Activated CD8-positive, alpha-beta T cell treated with anti-CD3 and anti-CD28 coated beads for 36 hours (primary cell): ENCODE measurements at regions of chr12 and their contacts with region 1.

Region 1: DNA sequence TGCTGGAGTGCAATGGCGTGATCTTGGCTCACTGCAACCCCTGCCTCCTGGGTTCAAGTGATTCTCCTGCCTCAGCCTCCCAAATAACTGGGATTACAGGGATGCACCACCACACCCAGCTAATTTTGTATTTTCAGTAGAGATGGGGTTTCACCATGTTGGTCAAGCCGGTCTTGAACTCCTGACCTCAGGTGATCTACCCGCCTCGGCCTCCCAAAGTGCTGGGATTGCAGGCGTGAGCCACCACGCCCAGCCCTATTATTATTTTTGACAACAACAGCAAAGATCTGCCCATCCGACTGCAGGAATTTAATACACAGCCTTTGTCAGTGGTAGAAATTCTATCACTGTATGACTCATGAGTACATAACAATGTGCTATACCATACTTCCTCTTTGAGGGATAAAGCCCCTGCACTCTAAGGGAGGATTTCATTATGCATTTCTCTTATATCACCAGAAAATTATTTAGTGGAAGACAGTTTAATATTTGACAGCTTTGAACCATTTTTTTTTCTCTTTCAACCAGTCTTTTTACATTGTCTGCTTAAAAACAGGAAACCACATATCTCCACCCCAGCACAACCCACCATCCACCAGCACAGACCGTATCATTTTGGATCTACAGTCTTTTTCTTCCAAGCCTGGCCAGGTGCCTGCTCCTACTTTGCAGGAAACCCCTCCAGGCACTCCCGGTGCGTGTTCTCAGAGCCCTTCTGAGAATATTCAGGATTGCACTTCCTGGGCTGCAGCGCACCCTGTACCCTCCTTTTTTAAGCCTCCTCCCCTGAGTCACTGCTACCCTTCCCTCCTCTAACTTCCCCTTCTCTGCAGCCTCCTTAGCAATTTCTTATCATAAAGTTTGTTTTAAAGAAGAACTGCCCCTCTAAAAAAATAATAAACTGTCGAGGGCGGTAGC is 594 bp downstream of the ARHGDIB start:
- DNase-seq: peak; percentile 51
- ATAC-seq: peak; percentile 45
- H3K4me3 Mint-ChIP-seq: peak overlapping the region; percentile 94
- H3K27ac Mint-ChIP-seq: peak overlapping the region; percentile 97
- H3K4me1 Mint-ChIP-seq: peaks cover 44% of the 10 kb centered on the region
- H3K27me3 Mint-ChIP-seq: no peaks in the 10 kb centered on the region
- CTCF ChIP-seq: no peak

Region 2: DNA sequence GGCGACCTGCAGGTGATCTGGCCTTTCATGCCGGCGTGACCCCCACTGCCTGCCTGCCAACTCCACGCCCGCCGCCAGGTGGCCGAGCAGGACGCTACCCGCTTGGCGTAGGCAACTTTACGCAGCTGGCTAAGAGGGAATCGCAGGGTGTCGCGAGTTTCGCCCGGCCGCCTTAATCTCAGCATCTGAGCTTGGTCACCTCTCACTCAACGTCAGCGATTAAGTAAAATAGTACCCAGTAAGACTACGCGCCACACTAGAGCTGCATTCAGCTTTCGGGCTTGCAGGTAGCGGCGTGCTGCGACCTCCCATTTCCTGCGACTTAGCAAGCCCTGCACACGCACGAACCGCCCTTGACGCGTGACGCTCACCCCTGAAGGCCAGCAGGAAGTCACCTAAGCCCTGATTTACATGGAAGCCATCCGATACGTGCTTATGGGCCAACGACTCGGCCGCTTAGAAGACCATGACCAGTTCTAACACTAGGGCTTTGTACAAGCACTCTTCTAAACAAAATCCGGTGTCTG is 190.8 kb before region 1 on chr12:
- CTCF ChIA-PET with region 1: interaction called, 6 read pairs
- POLR2A ChIA-PET with region 1: interaction called, 22 read pairs
- intact Hi-C with region 1: loop called (anchors 2 kb)
- DNase-seq: peak; percentile 94
- ATAC-seq: peak; percentile 54
- H3K4me3 Mint-ChIP-seq: peak overlapping the region; percentile 95
- H3K27ac Mint-ChIP-seq: peak overlapping the region; percentile 99
- H3K4me1 Mint-ChIP-seq: peaks cover 33% of the 10 kb centered on the region
- H3K27me3 Mint-ChIP-seq: no peaks in the 10 kb centered on the region
- CTCF ChIP-seq: peak; percentile 66

Region 3: DNA sequence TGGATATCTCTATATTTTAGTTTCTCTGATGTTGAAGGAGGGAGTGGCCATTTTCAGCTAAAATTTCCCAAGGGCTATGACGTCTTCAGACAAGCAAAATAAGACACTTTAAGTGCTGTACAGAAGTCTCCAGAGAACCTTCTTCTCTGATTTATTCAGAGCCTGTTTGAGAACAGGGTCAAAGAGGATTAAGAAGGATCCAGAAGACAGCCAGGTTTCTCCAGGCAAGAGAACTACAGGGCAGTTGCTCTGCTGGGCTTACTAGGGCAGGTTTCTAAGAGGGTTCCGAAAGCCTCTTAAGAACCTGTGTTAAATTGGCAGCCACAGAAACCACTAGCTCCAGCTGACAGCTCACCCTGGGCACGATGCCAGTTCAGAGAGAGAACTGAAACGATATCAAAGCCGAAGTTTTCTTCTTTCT is 76.3 kb before region 1 on chr12:
- CTCF ChIA-PET with region 1: no interaction called
- POLR2A ChIA-PET with region 1: interaction called, 3 read pairs
- intact Hi-C with region 1: loop called (anchors 5 kb)
- DNase-seq: peak; percentile 92
- ATAC-seq: peak; percentile 87
- H3K4me3 Mint-ChIP-seq: peak overlapping the region; percentile 51
- H3K27ac Mint-ChIP-seq: peak overlapping the region; percentile 10
- H3K4me1 Mint-ChIP-seq: peaks cover 32% of the 10 kb centered on the region
- H3K27me3 Mint-ChIP-seq: peaks cover 5% of the 10 kb centered on the region
- CTCF ChIP-seq: no peak

Region 4: GRCh38 chr12:14948672-14949071 is 12.1 kb before region 1 on chr12:
- CTCF ChIA-PET with region 1: interaction called, 4 read pairs
- POLR2A ChIA-PET with region 1: interaction called, 41 read pairs
- intact Hi-C with region 1: loop called (anchors 2 kb)
- DNase-seq: peak; percentile 73
- ATAC-seq: peak; percentile 77
- H3K4me3 Mint-ChIP-seq: peak overlapping the region; percentile 68
- H3K27ac Mint-ChIP-seq: peak overlapping the region; percentile 97
- H3K4me1 Mint-ChIP-seq: peaks cover 84% of the 10 kb centered on the region
- H3K27me3 Mint-ChIP-seq: no peaks in the 10 kb centered on the region
- CTCF ChIP-seq: no peak

Region 5: DNA sequence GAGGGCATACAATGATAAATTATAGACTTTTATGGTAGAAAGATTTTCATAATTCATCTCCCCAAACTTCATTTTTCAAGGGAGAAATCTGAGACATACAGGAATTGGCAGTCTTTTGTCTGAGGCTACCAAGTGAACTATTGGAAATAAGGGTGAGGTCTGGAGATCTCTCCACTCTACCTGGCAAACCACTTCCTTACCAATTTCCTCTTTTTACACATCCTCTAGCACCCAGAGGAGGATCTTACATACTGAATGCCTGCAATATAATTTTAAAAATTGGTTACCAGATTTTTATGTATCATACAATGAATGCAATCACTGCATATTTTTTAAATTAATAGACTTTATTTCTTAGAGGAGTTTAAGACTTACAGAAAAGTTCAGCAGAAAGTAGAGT is 18.7 kb after region 1 on chr12:
- CTCF ChIA-PET with region 1: interaction called, 3 read pairs
- POLR2A ChIA-PET with region 1: interaction called, 11 read pairs
- intact Hi-C with region 1: no loop called
- DNase-seq: no peak
- ATAC-seq: no peak
- H3K4me3 Mint-ChIP-seq: no peak overlapping the region
- H3K27ac Mint-ChIP-seq: no peak overlapping the region
- H3K4me1 Mint-ChIP-seq: peaks cover 49% of the 10 kb centered on the region
- H3K27me3 Mint-ChIP-seq: no peaks in the 10 kb centered on the region
- CTCF ChIP-seq: no peak